Transverse colon (tissue), 4 donors: ENCODE measurements at regions of chr18 and their contacts with region 1.

Region 1: GRCh38 chr18:34039201-34039600 is 185.5 kb downstream of the NOL4 start:
- DNase-seq: no peak
- H3K4me3 ChIP-seq: no peak overlapping the region
- H3K27ac ChIP-seq: no peak overlapping the region
- H3K4me1 ChIP-seq: peaks cover 0 to 6% (median 0%) of the 10 kb centered on the region in 4 donors
- H3K27me3 ChIP-seq: no peaks in the 10 kb centered on the region
- CTCF ChIP-seq: no peak
- EP300 ChIP-seq: no peak
- POLR2A ChIP-seq: no peak

Region 2: GRCh38 chr18:33839441-33840211 is 199.6 kb before region 1 on chr18:
- in situ Hi-C with region 1: loop called in 1 of 4 experiments (anchors 25 kb)
- intact Hi-C with region 1: no loop called
- DNase-seq: peak; percentile 44
- H3K4me3 ChIP-seq: peak overlapping the region in 1 of 4 donors; percentile 21
- H3K27ac ChIP-seq: peak overlapping the region in 1 of 4 donors; percentile 28
- H3K4me1 ChIP-seq: peaks cover 4 to 12% (median 11%) of the 10 kb centered on the region in 4 donors
- H3K27me3 ChIP-seq: no peaks in the 10 kb centered on the region
- CTCF ChIP-seq: peak; percentile 61 to 73 (median 66)
- EP300 ChIP-seq: no peak
- POLR2A ChIP-seq: no peak

Region 3: DNA sequence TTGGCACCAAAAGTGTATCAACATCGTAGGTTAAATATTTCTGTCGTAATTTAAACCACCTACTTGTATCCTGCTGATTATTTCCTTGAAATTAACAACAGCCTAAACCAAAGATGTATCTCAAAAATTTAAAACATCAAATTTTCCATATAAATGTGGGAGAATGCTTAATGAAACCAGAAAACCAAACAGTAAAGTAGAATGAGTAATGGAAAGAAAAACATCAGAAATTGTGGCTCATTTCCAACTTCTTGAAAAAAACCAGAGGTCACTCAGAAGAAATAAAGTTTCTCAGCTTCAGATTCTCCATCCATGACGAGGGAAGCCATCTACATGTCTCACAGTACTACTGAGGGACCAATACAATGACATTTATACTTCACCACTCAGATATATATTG is 111.0 kb before region 1 on chr18:
- in situ Hi-C with region 1: loop called in 1 of 4 experiments (anchors 25 kb)
- intact Hi-C with region 1: no loop called
- DNase-seq: no peak
- H3K4me3 ChIP-seq: no peak overlapping the region
- H3K27ac ChIP-seq: no peak overlapping the region
- H3K4me1 ChIP-seq: no peaks in the 10 kb centered on the region
- H3K27me3 ChIP-seq: no peaks in the 10 kb centered on the region
- CTCF ChIP-seq: no peak
- EP300 ChIP-seq: no peak
- POLR2A ChIP-seq: no peak

Region 4: GRCh38 chr18:34189656-34190435 is 150.6 kb after region 1 on chr18:
- in situ Hi-C with region 1: no loop called
- intact Hi-C with region 1: no loop called
- DNase-seq: no peak
- H3K4me3 ChIP-seq: no peak overlapping the region
- H3K27ac ChIP-seq: no peak overlapping the region
- H3K4me1 ChIP-seq: no peaks in the 10 kb centered on the region
- H3K27me3 ChIP-seq: no peaks in the 10 kb centered on the region
- CTCF ChIP-seq: no peak
- EP300 ChIP-seq: no peak
- POLR2A ChIP-seq: no peak